Adrenal gland (tissue), 19 donors: ENCODE measurements at regions of chr2 and their contacts with region 1.

Region 1: DNA sequence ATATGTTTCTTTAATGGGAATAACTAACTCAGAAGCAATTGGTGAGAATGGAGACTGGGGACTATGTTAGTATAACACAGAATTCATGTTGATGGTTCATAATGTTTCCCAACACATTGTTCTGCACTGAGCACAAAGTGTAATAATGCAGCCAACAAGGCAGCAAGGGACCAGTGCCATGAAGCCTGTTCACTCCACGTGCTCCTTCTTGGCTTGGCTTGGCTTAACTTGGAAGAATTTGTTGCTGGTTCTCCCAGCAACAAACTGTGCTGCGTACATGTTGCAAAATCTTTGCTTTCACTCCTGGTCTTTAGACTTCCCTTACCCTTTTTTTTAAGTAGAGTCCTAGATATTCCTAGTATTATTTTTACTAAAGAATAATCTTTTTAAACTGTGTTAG is 129.7 kb downstream of the MAP3K20 start:
- DNase-seq: peak in 5 of 7 donors; percentile 29 to 77 (median 46)
- H3K4me3 ChIP-seq: no peak overlapping the region
- H3K27ac ChIP-seq: no peak overlapping the region
- H3K4me1 ChIP-seq: peaks cover 3 to 6% of the 10 kb centered on the region in 2 donors
- H3K27me3 ChIP-seq: no peaks in the 10 kb centered on the region
- CTCF ChIP-seq: no peak
- POLR2A ChIP-seq: no peak

Region 2: GRCh38 chr2:173075781-173076580 is 129.4 kb before region 1 on chr2 and contains the start of gene MAP3K20:
- intact Hi-C with region 1: loop called (anchors 10 kb)
- DNase-seq: peak; percentile 73 to 80 (median 75)
- H3K4me3 ChIP-seq: peak within 1 kb of the TSS in 3 of 4 donors; percentile 45 to 95 (median 52)
- H3K27ac ChIP-seq: peak within 1 kb of the TSS; percentile 40 to 94 (median 91)
- H3K4me1 ChIP-seq: peaks cover 7 to 17% of the 10 kb centered on the region in 2 donors
- H3K27me3 ChIP-seq: no peaks in the 10 kb centered on the region
- CTCF ChIP-seq: peak in 3 of 6 experiments; percentile 39 to 46 (median 45)
- POLR2A ChIP-seq: peak in 1 of 2 donors; percentile 67
- total RNA-seq, gene MAP3K20: 10.9 to 54.2 (median 27.3) TPM

Region 3: DNA sequence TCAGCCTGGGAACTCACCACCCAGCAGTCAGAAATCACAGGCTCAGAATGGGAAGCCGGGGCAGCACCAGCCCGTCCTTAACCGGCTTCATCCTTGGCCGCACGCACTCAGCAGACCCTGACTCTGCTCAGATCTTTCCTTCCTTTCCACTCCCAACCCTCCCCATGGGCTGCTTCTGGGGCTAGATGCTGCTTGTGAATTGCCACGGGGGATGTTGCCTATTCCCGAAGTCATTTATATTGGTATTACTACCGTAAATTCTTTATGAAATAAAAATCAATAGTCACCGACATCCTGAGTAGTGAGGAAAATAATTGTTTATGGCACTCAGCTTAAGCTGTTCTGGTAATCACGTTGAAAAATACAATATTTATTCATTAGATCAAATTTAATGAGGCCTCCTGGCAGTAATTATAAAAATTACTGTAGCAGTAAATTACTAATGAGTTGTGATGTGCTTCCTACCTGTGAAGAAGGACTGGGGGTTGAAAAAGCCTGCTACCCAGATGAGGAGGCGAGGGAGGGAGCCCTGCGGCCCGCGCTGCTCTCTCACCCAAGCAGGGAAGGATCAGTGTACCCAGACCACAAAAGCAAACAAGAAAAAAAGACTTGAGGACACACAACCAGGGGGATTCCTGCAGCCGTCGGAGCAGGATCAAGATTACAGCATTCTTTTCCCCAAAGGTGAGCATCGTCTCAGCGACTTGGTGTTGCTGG is 180.8 kb after region 1 on chr2:
- intact Hi-C with region 1: no loop called
- DNase-seq: no peak
- H3K4me3 ChIP-seq: no peak overlapping the region
- H3K27ac ChIP-seq: no peak overlapping the region
- H3K4me1 ChIP-seq: no peaks in the 10 kb centered on the region
- H3K27me3 ChIP-seq: no peaks in the 10 kb centered on the region
- CTCF ChIP-seq: no peak
- POLR2A ChIP-seq: no peak

Region 4: DNA sequence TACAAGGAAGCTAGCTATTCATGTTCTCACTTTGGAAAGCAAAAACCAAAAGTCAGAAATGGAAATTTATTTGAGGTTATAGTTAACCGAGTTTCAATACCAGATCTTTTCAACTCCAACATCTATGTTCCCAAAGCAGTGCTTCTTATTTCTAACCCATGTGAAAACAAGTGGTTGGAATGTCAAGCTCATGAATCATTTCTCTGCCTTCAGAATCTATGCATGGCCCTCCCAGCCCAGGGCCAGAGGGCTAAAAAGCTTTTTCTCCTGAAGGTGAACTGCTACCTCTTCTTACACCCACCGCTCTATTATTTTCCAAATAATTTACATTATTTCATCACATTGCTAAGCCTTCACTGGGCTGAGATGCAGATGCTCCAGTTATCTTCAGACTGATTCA is 601.4 kb after region 1 on chr2:
- intact Hi-C with region 1: no loop called
- DNase-seq: no peak
- H3K4me3 ChIP-seq: no peak overlapping the region
- H3K27ac ChIP-seq: no peak overlapping the region
- H3K4me1 ChIP-seq: no peaks in the 10 kb centered on the region
- H3K27me3 ChIP-seq: no peaks in the 10 kb centered on the region
- CTCF ChIP-seq: no peak
- POLR2A ChIP-seq: no peak